ENCODE measurements at regions of chr6 and their contacts with region 1.

Region 1: DNA sequence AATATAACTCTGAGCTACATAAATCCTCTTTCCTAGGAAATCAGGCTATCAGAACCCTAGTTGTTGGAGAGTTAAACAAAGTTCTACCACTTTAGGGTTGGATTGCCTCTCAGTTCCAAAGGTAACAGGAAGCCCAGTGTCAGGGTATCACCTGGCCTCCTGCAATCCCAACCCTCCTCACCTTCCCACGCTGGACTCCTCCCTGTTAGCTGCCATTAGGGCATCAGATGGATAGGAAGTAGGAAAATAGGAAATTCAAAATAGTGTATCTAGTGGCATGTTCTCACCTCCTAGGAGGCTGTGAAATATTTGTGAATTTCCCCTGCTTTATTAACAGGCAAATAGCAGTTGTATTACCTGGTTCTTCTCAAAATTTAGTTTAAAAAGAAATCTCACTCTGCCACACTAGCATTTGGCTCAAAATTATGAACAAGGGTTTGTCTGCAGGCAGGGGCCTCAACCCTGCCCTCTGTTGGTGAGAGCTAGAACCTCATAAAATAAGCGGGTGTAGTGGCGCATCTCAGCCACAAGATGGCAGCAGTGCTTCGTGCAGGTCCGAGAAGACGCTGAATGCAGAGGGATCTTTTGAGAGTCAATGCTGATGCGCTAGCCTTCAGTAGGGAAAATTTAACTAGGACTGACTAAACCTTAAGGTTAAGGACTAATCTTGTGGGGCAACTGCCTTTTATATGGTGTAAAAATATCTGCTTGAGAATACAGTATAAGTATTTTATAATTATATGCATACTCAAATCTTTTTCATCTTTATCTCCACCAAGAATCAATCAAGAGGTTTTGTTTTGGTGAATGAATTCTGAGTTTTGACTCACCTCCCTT is 209.8 kb upstream of the KCNQ5 start:
- DNase-seq: peak; percentile 61 to 93 (median 79)
- ATAC-seq: peak; percentile 99
- H3K4me3 ChIP-seq: no peak overlapping the region
- H3K4me3 Mint-ChIP-seq: no peak overlapping the region
- H3K27ac ChIP-seq: no peak overlapping the region
- H3K27ac Mint-ChIP-seq: peak overlapping the region in 2 of 9 donors; percentile 15 to 28
- H3K4me1 ChIP-seq: no peaks in the 10 kb centered on the region
- H3K4me1 Mint-ChIP-seq: peaks cover 0 to 2% (median 0%) of the 10 kb centered on the region in 7 donors
- H3K27me3 ChIP-seq: no peaks in the 10 kb centered on the region
- H3K27me3 Mint-ChIP-seq: peaks cover 0 to 13% (median 0%) of the 10 kb centered on the region in 5 donors

Region 2: DNA sequence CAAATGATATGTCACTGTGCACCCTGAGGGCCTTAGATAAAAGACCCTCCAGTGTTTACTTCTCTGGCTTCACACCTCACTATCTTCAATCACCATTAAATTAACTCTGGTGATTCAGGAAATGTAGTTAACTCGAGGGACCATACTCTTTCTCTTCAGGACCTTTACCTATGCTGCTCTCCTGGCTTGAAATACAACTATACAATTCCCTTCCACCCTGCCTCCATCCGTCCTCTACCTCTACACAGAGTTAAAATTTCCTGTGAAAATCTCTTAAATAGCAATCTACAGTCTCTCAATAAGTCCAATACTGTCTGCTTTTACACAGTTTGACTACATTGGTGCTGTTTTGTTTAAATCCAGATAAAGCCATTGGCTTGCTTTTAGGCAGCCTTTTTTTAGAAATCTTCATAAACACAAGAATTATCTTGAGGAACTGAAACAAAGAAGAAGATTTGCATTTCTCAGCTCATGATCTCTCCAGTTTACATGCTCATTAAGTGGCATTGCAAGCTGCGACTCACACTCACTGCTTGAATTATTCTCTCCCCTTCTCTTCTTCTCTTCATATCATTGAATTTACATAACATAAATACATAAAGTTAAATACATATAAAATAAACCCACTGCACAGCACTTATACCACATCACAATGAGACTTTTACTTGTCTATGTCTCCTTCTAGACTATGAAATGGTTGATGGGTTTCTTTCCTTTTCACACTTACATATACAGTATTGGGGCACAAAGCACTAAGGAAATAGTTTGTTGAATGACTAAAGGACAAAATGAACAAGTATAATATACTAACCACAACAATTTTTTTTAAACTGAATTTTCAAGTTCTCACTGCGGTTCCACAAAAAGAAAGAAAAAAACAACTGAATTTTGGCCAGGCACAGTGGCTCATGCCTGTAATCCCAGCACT is 29.2 kb before region 1 on chr6:
- CTCF ChIA-PET with region 1: no interaction called
- POLR2A ChIA-PET with region 1: no interaction called
- intact Hi-C with region 1: no loop called
- DNase-seq: no peak
- ATAC-seq: peak; percentile 27
- H3K4me3 ChIP-seq: no peak overlapping the region
- H3K4me3 Mint-ChIP-seq: no peak overlapping the region
- H3K27ac ChIP-seq: no peak overlapping the region
- H3K27ac Mint-ChIP-seq: no peak overlapping the region
- H3K4me1 ChIP-seq: no peaks in the 10 kb centered on the region
- H3K4me1 Mint-ChIP-seq: no peaks in the 10 kb centered on the region
- H3K27me3 ChIP-seq: no peaks in the 10 kb centered on the region
- H3K27me3 Mint-ChIP-seq: peaks cover 10 to 29% (median 19%) of the 10 kb centered on the region in 5 donors

Region 3: GRCh38 chr6:72580281-72580940 is 168.3 kb after region 1 on chr6:
- CTCF ChIA-PET with region 1: interaction called, 5 read pairs
- POLR2A ChIA-PET with region 1: no interaction called
- intact Hi-C with region 1: loop called (anchors 5 kb)
- DNase-seq: peak in 1 of 9 donors; percentile 8
- ATAC-seq: peak; percentile 72
- H3K4me3 ChIP-seq: no peak overlapping the region
- H3K4me3 Mint-ChIP-seq: no peak overlapping the region
- H3K27ac ChIP-seq: no peak overlapping the region
- H3K27ac Mint-ChIP-seq: no peak overlapping the region
- H3K4me1 ChIP-seq: no peaks in the 10 kb centered on the region
- H3K4me1 Mint-ChIP-seq: peaks cover 0 to 5% (median 0%) of the 10 kb centered on the region in 7 donors
- H3K27me3 ChIP-seq: no peaks in the 10 kb centered on the region
- H3K27me3 Mint-ChIP-seq: peaks cover 0 to 7% (median 0%) of the 10 kb centered on the region in 5 donors

Region 4: DNA sequence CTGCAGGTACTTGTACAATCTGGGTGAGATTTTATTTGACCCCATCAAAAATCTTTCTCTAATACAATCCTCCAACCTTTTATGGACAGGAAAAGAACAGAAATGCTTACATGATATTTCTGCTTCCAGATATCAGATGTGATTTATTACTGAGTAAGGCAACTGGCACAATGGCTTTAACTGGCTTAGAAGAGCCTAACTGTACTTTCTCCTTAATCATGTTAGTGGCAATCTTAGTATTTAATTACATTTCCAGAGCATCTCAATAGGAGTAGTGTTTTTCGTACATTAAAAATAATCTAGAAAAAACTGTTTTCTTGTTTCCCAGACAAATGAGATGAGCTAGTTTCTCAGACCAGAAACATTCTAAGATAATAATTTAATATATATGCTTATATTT is 461.3 kb after region 1 on chr6:
- CTCF ChIA-PET with region 1: interaction called, 4 read pairs
- POLR2A ChIA-PET with region 1: no interaction called
- intact Hi-C with region 1: loop called in 1 of 2 experiments (anchors 10 kb)
- DNase-seq: no peak
- ATAC-seq: no peak
- H3K4me3 ChIP-seq: no peak overlapping the region
- H3K4me3 Mint-ChIP-seq: no peak overlapping the region
- H3K27ac ChIP-seq: no peak overlapping the region
- H3K27ac Mint-ChIP-seq: no peak overlapping the region
- H3K4me1 ChIP-seq: no peaks in the 10 kb centered on the region
- H3K4me1 Mint-ChIP-seq: peaks cover 0 to 9% (median 0%) of the 10 kb centered on the region in 7 donors
- H3K27me3 ChIP-seq: no peaks in the 10 kb centered on the region
- H3K27me3 Mint-ChIP-seq: no peaks in the 10 kb centered on the region

Region 5: GRCh38 chr6:73180763-73181619 is 768.9 kb after region 1 on chr6:
- CTCF ChIA-PET with region 1: interaction called, 4 read pairs
- POLR2A ChIA-PET with region 1: no interaction called
- intact Hi-C with region 1: loop called (anchors 1 kb)
- DNase-seq: peak in 6 of 9 donors; percentile 29 to 62 (median 44)
- ATAC-seq: peak; percentile 92
- H3K4me3 ChIP-seq: no peak overlapping the region
- H3K4me3 Mint-ChIP-seq: peak overlapping the region in 9 of 10 donors; percentile 12 to 69 (median 47)
- H3K27ac ChIP-seq: no peak overlapping the region
- H3K27ac Mint-ChIP-seq: peak overlapping the region in 1 of 9 donors; percentile 17
- H3K4me1 ChIP-seq: no peaks in the 10 kb centered on the region
- H3K4me1 Mint-ChIP-seq: peaks cover 4 to 11% (median 5%) of the 10 kb centered on the region in 7 donors
- H3K27me3 ChIP-seq: no peaks in the 10 kb centered on the region
- H3K27me3 Mint-ChIP-seq: no peaks in the 10 kb centered on the region